Activated CD4-positive, alpha-beta T cell treated with anti-CD3 and anti-CD28 coated beads for 36 hours (primary cell): ENCODE measurements at regions of chr10 and their contacts with region 1.

Region 1: GRCh38 chr10:33115738-33116719 is 158.0 kb upstream of the ITGB1 start:
- DNase-seq: no peak
- ATAC-seq: peak; percentile 30
- H3K4me3 Mint-ChIP-seq: no peak overlapping the region
- H3K27ac Mint-ChIP-seq: peak overlapping the region; percentile 62
- H3K4me1 Mint-ChIP-seq: peaks cover 86% of the 10 kb centered on the region
- H3K27me3 Mint-ChIP-seq: no peaks in the 10 kb centered on the region

Region 2: DNA sequence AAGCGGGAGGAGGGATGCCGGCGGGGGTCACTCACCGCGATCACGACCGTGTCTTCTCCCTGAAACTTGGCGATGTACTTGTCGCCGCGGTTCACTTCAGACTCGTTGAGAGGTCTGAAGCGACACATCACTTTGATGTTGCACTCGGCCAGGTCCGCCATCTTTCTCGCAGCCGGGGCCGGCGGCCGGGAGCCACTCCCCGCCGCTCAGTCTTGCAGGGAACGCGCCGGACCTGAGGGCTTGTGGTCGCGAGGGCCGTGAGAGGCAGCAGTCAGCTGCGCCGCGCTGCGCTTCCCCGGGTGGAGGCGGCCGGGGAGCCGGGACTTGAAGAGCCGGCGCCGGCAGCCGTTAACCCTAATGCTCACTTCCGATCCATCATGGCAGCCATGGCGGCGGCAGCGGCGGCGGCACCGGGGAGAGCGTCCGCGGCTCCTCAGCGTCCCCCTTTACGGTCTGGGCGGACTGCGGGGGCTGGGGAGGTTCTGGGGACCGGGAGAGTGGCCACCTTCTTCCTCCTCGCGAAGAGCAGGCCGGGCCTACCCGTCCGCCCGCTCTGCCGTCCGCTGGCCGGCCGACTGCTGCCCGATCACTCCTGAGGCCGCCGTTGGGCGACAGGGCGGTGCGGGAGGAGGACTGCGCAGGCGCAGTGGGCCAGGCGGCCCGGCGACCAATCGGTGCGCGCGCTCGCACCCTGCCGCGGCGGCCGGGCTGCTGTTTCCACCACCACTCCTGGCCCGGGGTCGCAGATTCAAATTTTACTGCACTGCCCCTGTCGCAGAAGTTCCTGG is 1060.0 kb before region 1 on chr10 and contains the start of gene KIF5B:
- CTCF ChIA-PET with region 1: interaction called, 3 read pairs
- POLR2A ChIA-PET with region 1: no interaction called
- intact Hi-C with region 1: loop called in 1 of 2 experiments (anchors 10 kb)
- DNase-seq: peak; percentile 92
- ATAC-seq: peak; percentile 92
- H3K4me3 Mint-ChIP-seq: peak within 1 kb of the TSS; percentile 97
- H3K27ac Mint-ChIP-seq: peak within 1 kb of the TSS; percentile 96
- H3K4me1 Mint-ChIP-seq: peaks cover 37% of the 10 kb centered on the region
- H3K27me3 Mint-ChIP-seq: no peaks in the 10 kb centered on the region
- total RNA-seq, gene KIF5B: 57.4 to 59.9 TPM

Region 3: DNA sequence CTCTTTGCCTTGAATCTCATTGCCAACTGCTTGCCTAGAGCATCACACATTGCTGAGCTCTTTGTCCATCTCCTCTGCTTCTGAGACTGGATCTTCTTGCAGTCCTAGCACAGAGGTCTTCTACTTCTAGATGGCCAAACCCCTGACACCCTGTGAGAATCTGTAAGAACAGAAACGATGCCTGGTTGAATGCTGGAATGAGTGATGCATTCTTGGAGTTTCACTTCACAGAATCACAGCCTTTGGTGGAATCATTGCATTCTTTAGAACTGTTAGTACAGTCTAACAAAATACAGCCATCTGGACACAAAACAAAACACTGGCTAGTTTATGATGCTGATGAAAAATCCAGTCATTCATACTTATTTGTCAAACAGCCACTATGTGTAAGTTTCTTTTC is 16.3 kb before region 1 on chr10:
- CTCF ChIA-PET with region 1: interaction called, 13 read pairs
- POLR2A ChIA-PET with region 1: no interaction called
- intact Hi-C with region 1: loop called in 1 of 2 experiments (anchors 2 kb)
- DNase-seq: no peak
- ATAC-seq: peak; percentile 74
- H3K4me3 Mint-ChIP-seq: no peak overlapping the region
- H3K27ac Mint-ChIP-seq: peak overlapping the region; percentile 45
- H3K4me1 Mint-ChIP-seq: peaks cover 39% of the 10 kb centered on the region
- H3K27me3 Mint-ChIP-seq: peaks cover 3% of the 10 kb centered on the region

Region 4: DNA sequence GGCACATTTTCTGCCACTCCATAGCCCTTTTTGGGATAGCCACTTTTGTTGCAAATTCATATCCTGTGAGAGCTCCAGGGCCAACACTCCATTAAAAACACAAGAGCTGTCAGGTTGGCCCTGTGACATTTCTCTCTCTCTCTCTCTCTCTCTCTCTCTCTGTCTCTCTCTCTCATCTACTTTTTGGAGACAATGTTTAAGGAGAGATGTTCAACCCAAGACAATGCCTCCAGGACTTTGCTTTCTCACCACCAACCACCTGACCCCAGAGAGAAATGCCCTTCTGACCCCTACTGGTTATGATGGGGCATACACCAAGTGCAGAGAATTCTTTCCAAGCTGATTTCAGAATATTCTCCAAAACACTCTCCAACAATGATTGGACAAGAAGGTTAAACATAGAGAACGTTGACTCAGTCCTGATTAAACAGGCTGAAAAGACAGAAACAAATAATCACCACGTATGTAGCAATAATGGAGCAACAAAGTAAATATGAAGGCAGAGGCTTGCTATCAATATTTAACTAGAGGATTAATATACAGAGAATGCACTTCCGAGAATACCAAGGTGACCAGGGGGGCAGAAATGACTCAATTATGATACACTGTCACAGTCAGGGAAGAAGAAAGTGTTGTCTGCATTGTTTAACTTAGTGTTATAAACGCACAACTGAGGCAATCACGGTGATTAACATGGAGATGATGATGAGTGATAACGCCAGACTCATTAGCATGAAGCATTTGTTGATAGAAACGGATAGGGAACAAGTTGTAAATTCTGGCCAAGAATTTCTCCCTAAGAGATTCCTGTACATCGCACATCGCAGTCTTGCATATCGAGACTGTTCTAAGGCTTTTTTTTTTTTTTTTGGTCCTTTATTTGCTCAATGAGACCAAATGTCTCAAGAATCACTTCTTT is 40.0 kb after region 1 on chr10:
- CTCF ChIA-PET with region 1: interaction called, 6 read pairs
- POLR2A ChIA-PET with region 1: no interaction called
- intact Hi-C with region 1: loop called (anchors 1 to 2 kb)
- DNase-seq: peak; percentile 52
- ATAC-seq: peak; percentile 63
- H3K4me3 Mint-ChIP-seq: no peak overlapping the region
- H3K27ac Mint-ChIP-seq: peak overlapping the region; percentile 34
- H3K4me1 Mint-ChIP-seq: peaks cover 41% of the 10 kb centered on the region
- H3K27me3 Mint-ChIP-seq: peaks cover 7% of the 10 kb centered on the region

Region 5: GRCh38 chr10:33265621-33266020 is 149.6 kb after region 1 on chr10:
- CTCF ChIA-PET with region 1: no interaction called
- POLR2A ChIA-PET with region 1: no interaction called
- intact Hi-C with region 1: loop called in 1 of 2 experiments (anchors 1 kb)
- DNase-seq: peak; percentile 84
- ATAC-seq: peak; percentile 47
- H3K4me3 Mint-ChIP-seq: no peak overlapping the region
- H3K27ac Mint-ChIP-seq: no peak overlapping the region
- H3K4me1 Mint-ChIP-seq: peaks cover 22% of the 10 kb centered on the region
- H3K27me3 Mint-ChIP-seq: peaks cover 29% of the 10 kb centered on the region

Region 6: DNA sequence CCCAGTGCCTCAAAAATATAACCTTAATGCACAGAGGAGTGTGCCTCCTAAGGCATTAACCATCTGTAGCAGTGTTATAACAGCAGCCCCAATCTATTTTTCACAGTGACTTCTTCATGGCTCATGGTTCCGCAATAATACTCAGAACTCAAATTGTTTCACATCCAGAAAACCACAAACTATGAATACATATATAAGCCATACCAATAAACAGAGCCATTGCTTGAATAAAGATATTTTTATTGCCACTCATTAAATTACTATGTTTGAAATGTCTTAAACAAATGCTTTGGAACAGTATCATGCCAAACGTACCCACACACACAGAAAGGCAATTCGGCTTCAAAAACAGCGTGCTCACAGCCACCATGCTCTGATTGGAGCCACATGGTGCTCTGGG is 847.7 kb after region 1 on chr10:
- CTCF ChIA-PET with region 1: no interaction called
- POLR2A ChIA-PET with region 1: no interaction called
- intact Hi-C with region 1: no loop called
- DNase-seq: no peak
- ATAC-seq: no peak
- H3K4me3 Mint-ChIP-seq: no peak overlapping the region
- H3K27ac Mint-ChIP-seq: no peak overlapping the region
- H3K4me1 Mint-ChIP-seq: no peaks in the 10 kb centered on the region
- H3K27me3 Mint-ChIP-seq: peaks cover 2% of the 10 kb centered on the region